ENCODE measurements at regions of chr21 and their contacts with region 1.

Region 1: DNA sequence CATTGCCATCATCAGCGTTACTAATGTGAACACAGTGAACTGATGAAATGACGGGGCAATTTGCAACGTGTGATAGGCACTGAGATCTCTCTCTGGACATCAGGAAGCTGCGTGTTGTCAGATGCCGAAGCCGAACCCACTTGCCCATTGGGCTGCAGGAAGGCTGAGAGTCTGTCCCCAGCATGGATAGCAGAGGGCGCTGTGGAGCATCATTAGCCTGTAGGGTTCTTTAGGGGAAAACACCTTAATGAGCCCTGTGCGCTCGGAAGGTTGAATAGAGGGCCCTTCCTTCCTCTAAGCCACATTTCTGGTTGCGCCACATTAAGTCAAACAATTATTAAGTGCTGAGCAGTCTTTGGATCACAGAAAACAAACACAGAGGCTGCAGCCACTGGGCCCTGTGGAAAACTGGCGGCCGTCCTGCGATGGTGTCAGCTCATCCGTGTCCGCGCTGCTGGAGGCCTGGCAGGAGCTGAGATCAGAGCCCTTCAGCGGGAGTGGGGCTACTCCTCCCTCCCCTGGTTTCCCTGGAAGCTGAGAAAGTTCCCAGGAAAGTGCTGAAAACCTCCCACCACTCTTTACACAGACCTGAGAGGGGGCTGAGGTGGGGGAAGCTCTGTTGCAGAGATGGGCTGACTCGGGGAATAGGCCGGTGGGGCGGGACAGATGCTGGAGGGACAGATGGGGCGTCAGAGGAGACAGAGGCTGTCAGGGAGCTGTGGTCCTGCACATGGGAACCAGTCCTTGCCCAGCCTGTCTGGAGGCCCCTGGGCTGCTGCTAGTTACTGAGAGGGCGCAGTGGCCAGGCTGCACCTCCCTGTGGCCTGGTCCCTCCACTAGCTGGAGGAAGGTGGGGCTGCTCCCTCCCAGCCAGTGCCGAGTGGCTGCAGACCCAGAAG is 12.7 kb downstream of the TFF2 start:
- DNase-seq: no peak
- ATAC-seq: peak; percentile 90
- H3K4me3 ChIP-seq: no peak overlapping the region
- H3K27ac ChIP-seq: no peak overlapping the region
- H3K4me1 ChIP-seq: peaks cover 13% of the 10 kb centered on the region
- H3K27me3 ChIP-seq: no peaks in the 10 kb centered on the region
- CTCF ChIP-seq: peak; percentile 50 to 62 (median 53)
- EP300 ChIP-seq: no peak
- POLR2A ChIP-seq: no peak
- RAD21 ChIP-seq: peak; percentile 81

Region 2: GRCh38 chr21:42349420-42350317 is 11.6 kb after region 1 on chr21:
- CTCF ChIA-PET with region 1: no interaction called
- POLR2A ChIA-PET with region 1: no interaction called
- RAD21 ChIA-PET with region 1: no interaction called
- SMC1A ChIA-PET with region 1: interaction called, 10 read pairs
- in situ Hi-C with region 1: no loop called
- intact Hi-C with region 1: no loop called
- DNase-seq: no peak
- ATAC-seq: no peak
- H3K4me3 ChIP-seq: no peak overlapping the region
- H3K27ac ChIP-seq: no peak overlapping the region
- H3K4me1 ChIP-seq: no peaks in the 10 kb centered on the region
- H3K27me3 ChIP-seq: no peaks in the 10 kb centered on the region
- CTCF ChIP-seq: no peak
- EP300 ChIP-seq: no peak
- POLR2A ChIP-seq: no peak
- RAD21 ChIP-seq: no peak

Region 3: DNA sequence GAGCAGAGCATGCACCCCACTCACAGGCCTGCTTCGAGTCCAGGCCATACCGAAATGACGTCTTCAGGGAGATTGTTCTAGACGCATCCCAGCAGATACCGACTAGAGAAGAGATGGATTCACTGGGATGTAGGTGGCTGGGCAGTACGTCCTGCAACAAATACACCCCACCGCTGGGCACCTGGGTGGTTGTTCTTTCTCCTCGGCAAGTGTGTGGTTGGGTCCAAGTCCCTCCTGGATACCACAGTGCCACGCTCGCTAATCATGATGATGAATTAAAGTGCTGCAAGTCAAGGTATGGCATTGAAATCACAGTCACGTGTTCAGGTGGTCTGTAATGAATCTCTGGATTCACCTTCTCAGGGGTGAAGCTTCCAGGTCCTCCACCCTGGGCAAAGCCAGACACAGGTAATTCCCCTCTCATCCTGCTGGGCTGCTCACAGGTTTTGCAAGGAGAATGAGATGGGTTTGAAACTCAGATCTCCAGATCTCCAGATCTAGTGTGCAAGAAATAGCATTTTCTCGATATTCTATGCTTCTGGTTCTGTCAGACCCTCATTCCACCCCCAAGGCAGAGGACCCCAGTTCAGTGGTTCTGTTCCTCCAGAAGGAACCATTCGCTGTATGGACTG is 111.3 kb after region 1 on chr21:
- CTCF ChIA-PET with region 1: interaction called, 8 read pairs
- POLR2A ChIA-PET with region 1: no interaction called
- RAD21 ChIA-PET with region 1: interaction called, 11 read pairs
- SMC1A ChIA-PET with region 1: interaction called, 8 read pairs
- in situ Hi-C with region 1: no loop called
- intact Hi-C with region 1: loop called (anchors 1 kb)
- DNase-seq: no peak
- ATAC-seq: peak; percentile 16
- H3K4me3 ChIP-seq: no peak overlapping the region
- H3K27ac ChIP-seq: peak overlapping the region; percentile 43
- H3K4me1 ChIP-seq: peaks cover 17% of the 10 kb centered on the region
- H3K27me3 ChIP-seq: no peaks in the 10 kb centered on the region
- CTCF ChIP-seq: no peak
- EP300 ChIP-seq: no peak
- POLR2A ChIP-seq: no peak
- RAD21 ChIP-seq: no peak

Region 4: GRCh38 chr21:42454786-42455580 is 116.9 kb after region 1 on chr21:
- CTCF ChIA-PET with region 1: interaction called, 5 read pairs
- POLR2A ChIA-PET with region 1: no interaction called
- RAD21 ChIA-PET with region 1: interaction called, 11 read pairs
- SMC1A ChIA-PET with region 1: interaction called, 8 read pairs
- in situ Hi-C with region 1: no loop called
- intact Hi-C with region 1: loop called (anchors 1 kb)
- DNase-seq: no peak
- ATAC-seq: no peak
- H3K4me3 ChIP-seq: no peak overlapping the region
- H3K27ac ChIP-seq: no peak overlapping the region
- H3K4me1 ChIP-seq: peaks cover 8% of the 10 kb centered on the region
- H3K27me3 ChIP-seq: no peaks in the 10 kb centered on the region
- CTCF ChIP-seq: no peak
- EP300 ChIP-seq: no peak
- POLR2A ChIP-seq: no peak
- RAD21 ChIP-seq: peak; percentile 27; the same call in 1 of the 2 replicates

Region 5: DNA sequence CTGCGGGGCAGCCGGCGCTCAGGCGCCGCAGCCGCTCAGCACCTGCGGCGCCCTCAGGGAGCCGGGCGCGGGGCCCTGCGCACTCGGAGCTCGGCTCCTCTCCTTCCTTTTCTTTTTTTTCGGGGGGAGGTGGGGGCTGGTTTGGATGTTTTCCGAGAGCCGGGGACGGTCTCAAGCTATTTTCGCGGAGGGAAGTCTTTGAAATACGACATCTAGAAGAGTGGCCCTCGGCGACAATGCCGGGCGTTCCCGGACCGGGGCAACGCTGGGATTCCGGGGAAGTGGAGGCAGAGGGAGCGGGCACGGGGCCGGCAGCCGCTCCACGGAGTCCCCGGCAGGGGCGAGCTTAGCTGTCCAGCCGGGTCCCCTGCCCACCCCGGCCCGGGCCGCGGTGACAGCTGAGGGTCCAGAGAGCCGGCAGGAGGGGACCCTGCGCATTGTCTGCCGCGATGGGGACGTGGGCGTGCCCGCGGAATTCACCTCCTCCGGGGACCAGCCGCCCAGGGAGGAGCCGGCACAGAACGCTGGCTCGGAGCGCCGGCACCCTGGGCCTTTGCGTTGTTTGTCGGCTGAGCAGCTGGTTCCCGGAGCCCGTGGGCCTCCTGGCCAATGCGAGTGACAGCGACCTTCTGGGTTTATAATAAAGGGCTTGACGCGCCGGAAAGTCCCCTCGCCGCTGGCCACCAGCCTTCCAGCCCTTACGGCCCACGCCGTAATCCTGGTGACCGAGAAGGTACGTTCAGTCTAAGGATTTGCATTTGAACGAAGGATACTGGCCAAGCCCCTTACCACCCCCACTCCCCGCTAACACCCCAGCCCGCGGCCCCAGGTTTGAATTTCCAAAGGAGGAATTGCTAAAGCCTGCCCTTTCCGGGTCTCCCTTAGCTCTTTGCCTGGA is 176.2 kb after region 1 on chr21:
- CTCF ChIA-PET with region 1: no interaction called
- POLR2A ChIA-PET with region 1: no interaction called
- RAD21 ChIA-PET with region 1: no interaction called
- SMC1A ChIA-PET with region 1: no interaction called
- in situ Hi-C with region 1: no loop called
- intact Hi-C with region 1: no loop called
- DNase-seq: no peak
- ATAC-seq: peak; percentile 84
- H3K4me3 ChIP-seq: peak overlapping the region; percentile 94
- H3K27ac ChIP-seq: peak overlapping the region; percentile 41
- H3K4me1 ChIP-seq: peaks cover 11% of the 10 kb centered on the region
- H3K27me3 ChIP-seq: no peaks in the 10 kb centered on the region
- CTCF ChIP-seq: no peak
- EP300 ChIP-seq: no peak; a peak in 1 of 4 replicates
- POLR2A ChIP-seq: peak; percentile 80
- RAD21 ChIP-seq: no peak

Measured in GM12878 (cell line).